Breast epithelium (tissue), 4 donors: ENCODE measurements at regions of chr15 and their contacts with region 1.

Region 1: DNA sequence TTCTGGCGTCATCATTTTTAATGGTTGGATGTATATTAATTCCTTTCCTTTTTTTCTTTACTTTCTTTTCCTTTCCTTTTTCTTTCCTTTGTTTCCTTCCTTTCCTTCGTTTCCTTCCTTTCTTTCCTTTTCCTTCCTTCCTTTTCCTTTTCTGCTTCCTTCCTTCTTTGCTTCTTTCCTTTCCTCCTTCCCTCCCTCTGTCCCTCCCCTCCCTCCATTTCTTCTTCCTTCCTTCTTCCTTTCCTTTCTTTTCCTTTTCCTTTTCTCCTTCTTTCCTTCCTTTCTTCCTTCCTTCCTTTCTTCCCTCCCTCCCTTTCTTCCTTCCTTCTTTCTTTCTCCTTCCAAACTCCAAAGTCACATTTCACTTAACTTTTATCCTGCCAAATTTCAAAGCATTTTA is 54.9 kb upstream of the LYSMD4 start:
- DNase-seq: no peak
- H3K4me3 ChIP-seq: no peak overlapping the region
- H3K27ac ChIP-seq: no peak overlapping the region
- H3K4me1 ChIP-seq: no peaks in the 10 kb centered on the region
- H3K27me3 ChIP-seq: no peaks in the 10 kb centered on the region
- CTCF ChIP-seq: no peak
- POLR2A ChIP-seq: no peak

Region 2: DNA sequence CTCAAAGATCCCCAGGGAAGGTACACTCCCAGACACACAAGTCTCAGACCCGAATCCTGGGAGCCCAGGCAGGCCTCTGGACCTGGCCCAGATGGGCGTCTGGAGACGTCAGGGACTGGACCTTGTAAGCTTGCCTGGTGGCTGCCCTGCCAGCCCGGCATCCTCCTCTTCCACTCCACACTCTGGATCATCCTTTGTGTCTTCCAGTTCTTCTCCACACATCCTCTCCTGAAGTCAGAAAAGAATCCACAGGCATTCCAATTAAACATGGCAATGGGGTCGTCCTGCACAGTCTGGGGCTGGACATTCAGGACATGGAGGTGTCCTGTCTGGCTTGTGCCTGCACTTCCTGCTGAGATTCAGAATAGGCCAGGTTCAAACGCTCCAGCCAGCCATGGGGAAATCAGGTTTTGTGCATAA is 1348.7 kb before region 1 on chr15:
- intact Hi-C with region 1: loop called (anchors 5 kb)
- DNase-seq: no peak
- H3K4me3 ChIP-seq: no peak overlapping the region
- H3K27ac ChIP-seq: no peak overlapping the region
- H3K4me1 ChIP-seq: no peaks in the 10 kb centered on the region
- H3K27me3 ChIP-seq: no peaks in the 10 kb centered on the region
- CTCF ChIP-seq: no peak
- POLR2A ChIP-seq: no peak